Left lung (tissue), 14 donors: ENCODE measurements at regions of chr1 and their contacts with region 1.

Region 1: GRCh38 chr1:27603681-27604578 is at the start of gene AHDC1:
- DNase-seq: peak; percentile 89 to 98 (median 91)
- ATAC-seq: peak; percentile 79
- H3K4me3 ChIP-seq: peak within 1 kb of the TSS; percentile 78 to 79
- H3K27ac ChIP-seq: peak within 1 kb of the TSS; percentile 83 to 88
- H3K4me1 ChIP-seq: peaks cover 26 to 62% of the 10 kb centered on the region in 2 donors
- H3K27me3 ChIP-seq: peaks cover 0 to 18% of the 10 kb centered on the region in 2 donors
- CTCF ChIP-seq: no peak
- polyA plus RNA-seq, gene AHDC1: 32.2 to 48.8 (median 41.9) TPM

Region 2: DNA sequence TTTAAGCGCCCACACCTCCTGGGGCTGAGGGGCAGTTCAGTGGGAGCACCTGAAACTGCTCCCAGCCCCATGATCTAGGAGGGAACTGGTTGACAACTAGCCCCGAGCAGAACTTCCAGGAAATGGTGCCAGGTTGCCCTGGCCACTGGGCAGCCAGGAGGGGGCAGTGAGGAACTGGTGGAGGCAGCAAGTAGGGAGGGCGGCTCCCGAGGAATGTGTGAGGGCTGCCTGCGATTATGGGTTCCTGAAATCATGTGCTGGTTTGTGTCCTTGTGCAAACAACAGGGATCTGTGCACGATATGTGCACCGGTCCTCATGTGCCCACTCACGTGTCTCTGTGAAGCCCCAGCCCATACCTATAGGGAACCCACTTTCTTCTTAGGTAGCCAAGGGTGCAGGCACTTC is 201.6 kb before region 1 on chr1:
- intact Hi-C with region 1: loop called in 1 of 2 experiments (anchors 5 kb)
- DNase-seq: peak in 3 of 4 donors; percentile 69 to 88 (median 86)
- ATAC-seq: peak; percentile 83
- H3K4me3 ChIP-seq: no peak overlapping the region
- H3K27ac ChIP-seq: peak overlapping the region; percentile 59 to 60
- H3K4me1 ChIP-seq: peaks cover 26 to 56% of the 10 kb centered on the region in 2 donors
- H3K27me3 ChIP-seq: no peaks in the 10 kb centered on the region
- CTCF ChIP-seq: peak; percentile 34 to 52

Region 3: DNA sequence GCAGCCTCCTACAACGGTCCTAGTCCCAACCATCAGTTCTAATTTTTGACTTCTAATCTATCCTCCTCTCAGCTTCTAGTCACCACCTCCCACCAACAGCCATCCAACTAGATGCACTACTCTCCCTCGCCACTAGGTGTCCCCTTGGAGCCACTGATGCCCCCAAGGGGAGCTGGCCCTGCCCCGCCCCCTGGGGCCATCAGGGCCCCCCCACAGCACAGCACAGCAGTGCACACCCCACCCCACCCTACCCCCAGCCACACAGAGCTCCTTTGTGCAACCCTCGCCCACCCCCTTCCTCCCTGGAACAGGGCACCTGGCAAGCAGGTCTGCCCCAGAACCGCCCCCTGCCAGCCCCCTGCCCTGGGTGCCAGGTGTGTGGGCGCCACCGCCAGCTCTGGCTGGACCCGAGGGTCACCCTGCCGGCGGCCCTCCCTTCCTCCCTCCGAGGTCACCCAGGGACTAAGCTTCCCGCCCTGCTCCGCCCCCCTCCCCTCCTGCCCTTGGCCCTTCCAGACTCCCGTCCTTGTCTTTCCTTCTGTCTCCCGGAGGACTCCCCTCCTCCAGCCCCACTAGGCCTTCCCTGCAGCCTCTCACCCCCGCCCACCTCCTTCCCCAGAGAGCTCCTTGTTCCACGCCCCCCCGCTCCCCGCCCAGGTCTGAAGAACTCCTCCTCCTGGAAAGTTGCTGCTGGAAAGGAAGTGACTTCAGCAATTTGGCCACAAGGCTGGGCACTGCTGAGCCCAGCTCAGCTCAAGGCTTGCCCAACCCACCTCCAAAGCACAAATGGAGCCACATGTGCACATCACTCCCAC is 46.9 kb before region 1 on chr1:
- intact Hi-C with region 1: loop called in 1 of 2 experiments (anchors 5 kb)
- DNase-seq: peak in 3 of 4 donors; percentile 92 to 96 (median 95)
- ATAC-seq: peak; percentile 85
- H3K4me3 ChIP-seq: peak overlapping the region in 1 of 2 donors; percentile 31
- H3K27ac ChIP-seq: peak overlapping the region; percentile 56 to 80
- H3K4me1 ChIP-seq: peaks cover 33 to 49% of the 10 kb centered on the region in 2 donors
- H3K27me3 ChIP-seq: no peaks in the 10 kb centered on the region
- CTCF ChIP-seq: peak; percentile 90 to 97

Region 4: DNA sequence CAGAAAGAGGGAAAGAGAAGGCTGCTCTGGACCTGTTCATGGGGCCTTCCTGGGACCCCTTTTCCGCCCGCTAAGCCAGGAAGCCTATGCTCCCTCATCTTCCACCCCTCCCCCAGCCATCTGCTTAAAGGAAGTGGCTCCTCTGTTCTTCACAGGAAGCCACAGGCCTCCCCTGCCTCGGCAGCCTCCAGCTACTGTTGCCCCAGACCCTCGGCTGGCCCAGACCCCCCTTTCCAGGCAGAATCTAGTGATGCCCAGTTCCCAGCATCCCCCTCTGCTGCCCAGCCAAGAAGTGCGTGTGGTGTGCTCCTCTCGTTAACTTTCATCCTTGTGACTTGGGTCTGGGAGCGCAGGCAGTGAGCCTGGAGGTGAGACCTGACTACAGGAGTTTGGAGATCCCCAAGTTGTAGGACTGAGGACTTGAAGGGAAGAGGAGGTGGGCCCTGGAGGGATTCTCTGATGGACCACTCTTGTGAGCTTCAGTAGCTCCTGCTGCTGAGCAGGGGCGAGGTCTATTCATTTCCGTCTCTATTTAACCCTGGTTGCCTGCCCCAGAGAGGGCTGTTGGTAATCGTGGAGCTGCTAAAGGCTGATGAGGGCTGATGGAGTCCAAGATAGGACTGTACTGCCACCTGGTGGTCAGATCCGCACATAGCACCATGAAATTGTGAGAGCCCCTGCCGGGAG is 58.9 kb after region 1 on chr1:
- intact Hi-C with region 1: loop called in 1 of 2 experiments (anchors 5 kb)
- DNase-seq: peak; percentile 79 to 86 (median 80)
- ATAC-seq: peak; percentile 87
- H3K4me3 ChIP-seq: no peak overlapping the region
- H3K27ac ChIP-seq: peak overlapping the region; percentile 44 to 83
- H3K4me1 ChIP-seq: peaks cover 5 to 58% of the 10 kb centered on the region in 2 donors
- H3K27me3 ChIP-seq: no peaks in the 10 kb centered on the region
- CTCF ChIP-seq: peak; percentile 85 to 87

Region 5: GRCh38 chr1:28104866-28105467 is 501.0 kb after region 1 on chr1:
- intact Hi-C with region 1: no loop called
- DNase-seq: peak in 2 of 4 donors; percentile 28 to 66
- ATAC-seq: peak; percentile 98
- H3K4me3 ChIP-seq: peak overlapping the region in 1 of 2 donors; percentile 7
- H3K27ac ChIP-seq: peak overlapping the region; percentile 33 to 38
- H3K4me1 ChIP-seq: peaks cover 0 to 33% of the 10 kb centered on the region in 2 donors
- H3K27me3 ChIP-seq: no peaks in the 10 kb centered on the region
- CTCF ChIP-seq: no peak